PC-3 (cell line): ENCODE measurements at regions of chr1 and their contacts with region 1.

Region 1: GRCh38 chr1:113534130-113534817 is 144.0 kb downstream of the MAGI3 start:
- DNase-seq: no peak
- ATAC-seq: no peak
- H3K4me3 ChIP-seq: no peak overlapping the region
- H3K27ac ChIP-seq: no peak overlapping the region
- H3K4me1 ChIP-seq: peaks cover 21% of the 10 kb centered on the region
- H3K27me3 ChIP-seq: no peaks in the 10 kb centered on the region
- CTCF ChIP-seq: no peak

Region 2: DNA sequence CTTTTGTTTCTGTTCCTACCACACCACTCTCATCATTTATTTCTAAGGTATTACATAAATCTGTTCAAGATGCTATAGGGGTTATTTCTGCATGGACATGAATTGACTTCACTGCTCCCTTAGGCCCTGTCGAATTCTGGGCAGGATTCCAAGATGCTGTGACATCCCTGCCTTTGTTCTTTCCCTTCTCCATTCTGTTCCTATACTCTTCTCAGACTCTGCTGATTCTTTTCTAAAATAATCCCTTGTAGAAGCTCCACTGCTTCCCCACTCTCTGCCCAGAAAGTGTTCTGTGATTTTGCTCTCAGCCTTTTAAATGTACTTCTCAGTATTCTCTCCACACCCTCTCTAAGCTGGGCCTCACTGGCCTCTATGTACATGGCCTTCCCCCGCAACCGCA is 125.8 kb after region 1 on chr1:
- CTCF ChIA-PET with region 1: no interaction called
- POLR2A ChIA-PET with region 1: no interaction called
- intact Hi-C with region 1: loop called (anchors 5 kb)
- DNase-seq: no peak
- ATAC-seq: no peak
- H3K4me3 ChIP-seq: no peak overlapping the region
- H3K27ac ChIP-seq: no peak overlapping the region
- H3K4me1 ChIP-seq: peaks cover 42% of the 10 kb centered on the region
- H3K27me3 ChIP-seq: no peaks in the 10 kb centered on the region
- CTCF ChIP-seq: no peak